Mammary epithelial cell (primary cell): ENCODE measurements at regions of chr4 and their contacts with region 1.

Region 1: DNA sequence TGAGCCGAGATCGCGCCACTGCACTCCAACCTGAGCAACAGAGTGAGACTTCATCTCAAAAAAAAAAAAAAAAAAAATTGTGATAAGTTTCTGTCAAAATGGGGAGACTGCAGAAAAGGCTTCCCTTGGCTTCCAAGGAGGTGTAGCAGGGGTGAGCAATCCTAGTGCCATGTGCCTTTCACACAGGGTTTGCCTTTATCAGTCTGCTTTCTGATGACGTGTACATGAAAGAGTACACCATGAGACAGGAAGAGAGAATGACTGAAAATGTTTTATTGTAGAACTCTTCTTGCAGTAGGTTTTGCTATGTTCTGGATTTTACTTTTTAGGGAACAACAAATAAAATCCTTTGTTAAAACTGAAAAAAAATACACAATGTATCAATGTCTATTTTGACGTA is 23.4 kb upstream of the ZFP42 start:
- DNase-seq: no peak
- H3K4me3 ChIP-seq: no peak overlapping the region
- H3K27ac ChIP-seq: no peak overlapping the region
- H3K4me1 ChIP-seq: no peaks in the 10 kb centered on the region
- H3K27me3 ChIP-seq: no peaks in the 10 kb centered on the region
- CTCF ChIP-seq: no peak

Region 2: GRCh38 chr4:187724456-187724855 is 247.7 kb before region 1 on chr4:
- CTCF ChIA-PET with region 1: no interaction called
- dilution Hi-C with region 1: no loop called
- in situ Hi-C with region 1: no loop called
- intact Hi-C with region 1: no loop called
- DNase-seq: no peak
- H3K4me3 ChIP-seq: no peak overlapping the region
- H3K27ac ChIP-seq: no peak overlapping the region
- H3K4me1 ChIP-seq: no peaks in the 10 kb centered on the region
- H3K27me3 ChIP-seq: no peaks in the 10 kb centered on the region
- CTCF ChIP-seq: no peak

Region 3: DNA sequence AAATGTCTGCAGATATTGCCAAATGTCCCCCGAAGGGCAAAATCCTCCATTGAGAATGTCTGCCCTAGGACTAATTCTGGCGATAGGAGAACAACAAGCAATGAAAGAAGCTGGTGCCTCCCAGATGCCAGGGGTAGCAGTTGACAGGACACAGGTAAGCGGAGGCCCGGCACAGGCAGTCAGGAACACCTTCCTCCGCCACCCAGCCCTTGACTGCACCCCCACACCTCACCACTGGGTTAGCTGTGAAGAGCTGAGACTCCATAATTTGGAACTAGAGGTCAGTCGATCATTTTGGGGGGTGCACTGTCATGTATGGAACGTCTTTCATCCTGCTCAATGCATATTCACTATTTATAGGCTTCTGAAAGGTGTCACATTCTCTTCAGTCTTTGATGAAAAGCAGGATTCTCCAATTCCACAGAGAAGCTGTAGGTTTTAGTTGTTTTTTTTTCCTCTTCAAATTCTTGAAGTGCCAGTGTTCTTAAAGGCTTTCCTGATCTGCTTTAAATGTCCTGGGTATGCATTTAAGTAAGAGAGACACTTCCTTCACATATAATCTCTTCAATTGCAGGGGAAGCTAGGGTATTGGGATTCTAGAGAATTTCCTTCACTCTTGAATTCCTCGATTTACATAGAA is 88.2 kb before region 1 on chr4:
- CTCF ChIA-PET with region 1: no interaction called
- dilution Hi-C with region 1: loop called (anchors 5 kb)
- in situ Hi-C with region 1: no loop called
- intact Hi-C with region 1: no loop called
- DNase-seq: no peak
- H3K4me3 ChIP-seq: no peak overlapping the region
- H3K27ac ChIP-seq: no peak overlapping the region
- H3K4me1 ChIP-seq: no peaks in the 10 kb centered on the region
- H3K27me3 ChIP-seq: no peaks in the 10 kb centered on the region
- CTCF ChIP-seq: no peak